A549 (cell line): ENCODE measurements at regions of chr10 and their contacts with region 1.

Region 1: DNA sequence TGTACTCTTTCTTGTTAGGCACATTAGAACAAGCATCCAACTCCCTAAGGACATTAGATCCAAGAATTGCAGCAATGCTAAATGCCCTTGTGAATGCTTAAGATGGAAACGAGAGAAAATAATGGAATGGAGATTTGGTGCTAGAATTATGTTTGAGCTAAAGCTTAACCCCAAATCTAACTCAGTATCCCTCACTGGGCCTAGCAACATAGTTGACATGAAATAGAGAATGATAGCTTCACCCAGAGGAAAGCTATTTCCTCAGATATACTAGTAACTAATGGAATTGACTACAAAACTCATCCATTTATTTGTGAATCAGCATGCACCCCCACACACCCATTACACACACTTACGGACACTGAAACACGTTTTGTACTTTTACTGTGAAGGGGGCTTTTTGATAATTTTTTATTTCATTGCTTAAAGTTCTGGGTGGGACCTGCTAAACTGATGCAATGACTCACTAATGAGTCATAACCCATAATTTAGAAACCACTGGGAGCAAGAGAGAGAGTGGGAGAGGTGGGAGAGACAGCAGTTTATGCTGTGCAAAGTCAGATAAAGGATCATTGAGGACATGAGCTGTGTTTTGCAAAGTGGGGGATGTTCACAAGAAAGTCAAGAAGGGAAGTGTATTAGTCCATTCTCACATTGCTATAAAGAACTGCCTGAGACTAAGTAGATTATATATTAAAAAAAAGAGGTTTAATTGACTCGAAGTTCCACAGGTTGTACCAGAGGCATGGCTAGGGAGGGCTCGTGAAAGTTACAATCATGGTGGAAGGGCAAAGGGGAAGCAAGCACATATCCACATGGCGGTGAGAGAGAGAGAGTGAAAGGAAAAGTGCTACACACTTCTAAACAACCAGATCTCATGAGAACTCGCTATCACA is 382.7 kb downstream of the SFMBT2 start:
- DNase-seq: no peak
- ATAC-seq: no peak
- H3K4me3 ChIP-seq: no peak overlapping the region
- H3K27ac ChIP-seq: no peak overlapping the region
- H3K4me1 ChIP-seq: no peaks in the 10 kb centered on the region
- CTCF ChIP-seq: no peak
- EP300 ChIP-seq: no peak
- POLR2A ChIP-seq: no peak
- RAD21 ChIP-seq: no peak

Region 2: DNA sequence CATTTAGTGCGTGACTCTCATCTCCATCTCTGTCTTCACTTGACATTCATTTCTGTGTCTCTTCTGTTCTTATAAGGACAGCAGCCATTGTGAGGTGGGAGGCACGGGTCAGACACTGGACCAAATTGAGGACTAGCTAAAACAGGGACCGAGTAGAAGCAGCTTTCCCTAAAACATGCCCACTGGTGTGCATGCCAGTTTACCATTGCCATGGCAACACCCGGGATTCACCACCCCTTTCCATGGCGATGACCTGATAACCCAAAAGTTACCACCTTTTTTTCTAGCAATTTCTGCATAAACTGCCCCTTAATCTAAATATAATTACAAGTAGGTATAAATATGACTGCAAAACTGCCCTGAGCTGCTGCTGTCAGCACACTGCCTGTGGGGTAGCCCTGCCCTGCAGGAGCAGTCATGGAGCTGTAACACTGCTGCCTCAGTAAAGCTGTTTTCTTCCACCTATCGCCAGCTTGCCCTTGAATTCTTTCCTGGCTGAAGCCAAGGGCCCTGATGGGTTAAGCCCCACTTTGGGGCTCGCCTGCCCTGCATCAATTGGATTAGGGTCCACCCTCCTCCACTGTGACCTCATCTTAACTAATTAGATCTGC is 13.7 kb after region 1 on chr10:
- CTCF ChIA-PET with region 1: interaction called, 10 read pairs
- POLR2A ChIA-PET with region 1: no interaction called
- DNase-seq: no peak
- ATAC-seq: no peak
- H3K4me3 ChIP-seq: no peak overlapping the region
- H3K27ac ChIP-seq: no peak overlapping the region
- H3K4me1 ChIP-seq: no peaks in the 10 kb centered on the region
- CTCF ChIP-seq: no peak
- EP300 ChIP-seq: no peak
- POLR2A ChIP-seq: no peak
- RAD21 ChIP-seq: no peak